H1 (cell line): ENCODE measurements at regions of chr10 and their contacts with region 1.

Region 1: DNA sequence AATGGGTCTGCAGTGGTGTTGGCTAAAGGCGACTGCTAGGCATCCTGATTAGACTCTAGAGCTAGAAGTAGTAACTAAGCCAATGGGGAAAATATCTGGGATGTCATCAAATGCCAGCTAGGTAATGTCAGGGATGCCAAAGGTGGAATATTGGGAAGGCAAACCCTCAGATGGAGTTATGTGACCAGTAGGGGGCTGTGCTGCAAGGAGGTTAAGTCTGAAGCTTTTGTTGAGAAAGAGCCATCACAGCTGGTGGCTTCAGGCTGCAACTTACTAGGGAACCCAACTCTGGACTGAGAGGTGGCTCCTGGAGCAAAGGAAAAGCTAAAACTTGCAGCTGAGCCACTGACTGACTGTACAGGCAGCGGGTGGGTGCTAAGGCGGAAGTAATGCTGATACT is 576.9 kb upstream of the GHITM start:
- DNase-seq: no peak
- H3K4me3 ChIP-seq: no peak overlapping the region
- H3K27ac ChIP-seq: no peak overlapping the region
- H3K4me1 ChIP-seq: no peaks in the 10 kb centered on the region
- H3K27me3 ChIP-seq: no peaks in the 10 kb centered on the region
- CTCF ChIP-seq: peak in 2 of 3 experiments; percentile 37 to 59; a peak in 3 of 4 replicates
- EP300 ChIP-seq: no peak
- POLR2A ChIP-seq: no peak
- RAD21 ChIP-seq: peak; percentile 45 to 57

Region 2: DNA sequence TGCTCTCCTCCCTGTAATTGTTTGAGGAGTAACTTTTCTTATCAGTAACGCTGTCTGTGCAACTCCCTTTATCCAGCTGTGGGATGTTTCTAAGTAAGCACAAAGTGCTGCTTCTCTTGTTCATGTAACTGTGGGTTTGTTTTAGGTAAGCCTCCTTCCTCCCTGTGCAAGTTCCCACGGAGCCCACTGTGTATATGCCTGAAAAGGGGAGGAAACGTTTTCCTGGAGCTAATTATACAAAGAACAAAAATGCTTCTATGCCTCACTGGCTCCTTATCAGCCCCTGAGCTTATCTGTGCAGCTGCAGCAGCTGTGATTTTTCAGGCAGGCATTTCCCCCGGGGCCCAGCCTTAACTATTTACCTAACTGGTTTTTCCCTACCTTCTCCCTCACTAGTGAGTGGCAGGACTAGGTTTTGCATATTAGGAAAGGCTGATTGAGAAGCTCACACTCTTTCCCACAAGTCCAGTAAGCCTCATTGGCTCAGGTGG is 16.4 kb before region 1 on chr10:
- CTCF ChIA-PET with region 1: interaction called, 10 read pairs
- POLR2A ChIA-PET with region 1: no interaction called
- DNase-seq: no peak
- H3K4me3 ChIP-seq: no peak overlapping the region
- H3K27ac ChIP-seq: no peak overlapping the region
- H3K4me1 ChIP-seq: peaks cover 0 to 14% (median 3%) of the 10 kb centered on the region in 4 experiments; a peak in 3 of 7 replicates
- H3K27me3 ChIP-seq: no peaks in the 10 kb centered on the region
- CTCF ChIP-seq: no peak
- EP300 ChIP-seq: no peak
- POLR2A ChIP-seq: no peak
- RAD21 ChIP-seq: no peak